ENCODE measurements at regions of chr2 and their contacts with region 1.

Region 1: GRCh38 chr2:207887500-207887899 is 117.8 kb upstream of the FZD5 start:
- DNase-seq: no peak
- H3K4me3 ChIP-seq: no peak overlapping the region
- H3K27ac ChIP-seq: no peak overlapping the region
- H3K4me1 ChIP-seq: no peaks in the 10 kb centered on the region
- H3K27me3 ChIP-seq: no peaks in the 10 kb centered on the region
- CTCF ChIP-seq: no peak

Region 2: DNA sequence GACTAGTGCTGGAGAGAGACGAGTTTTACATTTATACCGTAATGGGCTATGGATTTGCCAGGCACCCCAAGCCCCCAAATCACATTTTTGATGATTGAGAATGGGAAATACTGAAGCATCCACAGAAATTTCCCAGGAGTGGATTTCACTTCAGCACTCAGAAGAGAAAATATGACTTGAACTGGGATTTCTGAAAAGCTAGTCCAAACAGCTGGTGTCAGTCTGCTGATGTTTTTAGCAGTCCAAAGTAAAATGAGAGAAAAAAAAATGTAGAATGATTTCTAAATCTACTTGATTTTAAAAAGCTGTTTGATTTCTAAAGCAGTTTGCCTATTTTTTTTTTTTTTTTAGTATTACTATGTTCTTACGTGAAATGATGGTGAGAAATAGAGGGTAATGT is 32.8 kb after region 1 on chr2:
- CTCF ChIA-PET with region 1: no interaction called
- dilution Hi-C with region 1: loop called (anchors 5 kb)
- in situ Hi-C with region 1: no loop called
- intact Hi-C with region 1: no loop called
- DNase-seq: no peak
- H3K4me3 ChIP-seq: no peak overlapping the region
- H3K27ac ChIP-seq: no peak overlapping the region
- H3K4me1 ChIP-seq: no peaks in the 10 kb centered on the region
- H3K27me3 ChIP-seq: no peaks in the 10 kb centered on the region
- CTCF ChIP-seq: no peak

Region 3: GRCh38 chr2:207970147-207970825 is 82.8 kb after region 1 on chr2:
- CTCF ChIA-PET with region 1: no interaction called
- dilution Hi-C with region 1: no loop called
- in situ Hi-C with region 1: no loop called
- intact Hi-C with region 1: no loop called
- DNase-seq: no peak
- H3K4me3 ChIP-seq: no peak overlapping the region
- H3K27ac ChIP-seq: no peak overlapping the region
- H3K4me1 ChIP-seq: no peaks in the 10 kb centered on the region
- H3K27me3 ChIP-seq: no peaks in the 10 kb centered on the region
- CTCF ChIP-seq: no peak